A673 (cell line): ENCODE measurements at regions of chr2 and their contacts with region 1.

Region 1: DNA sequence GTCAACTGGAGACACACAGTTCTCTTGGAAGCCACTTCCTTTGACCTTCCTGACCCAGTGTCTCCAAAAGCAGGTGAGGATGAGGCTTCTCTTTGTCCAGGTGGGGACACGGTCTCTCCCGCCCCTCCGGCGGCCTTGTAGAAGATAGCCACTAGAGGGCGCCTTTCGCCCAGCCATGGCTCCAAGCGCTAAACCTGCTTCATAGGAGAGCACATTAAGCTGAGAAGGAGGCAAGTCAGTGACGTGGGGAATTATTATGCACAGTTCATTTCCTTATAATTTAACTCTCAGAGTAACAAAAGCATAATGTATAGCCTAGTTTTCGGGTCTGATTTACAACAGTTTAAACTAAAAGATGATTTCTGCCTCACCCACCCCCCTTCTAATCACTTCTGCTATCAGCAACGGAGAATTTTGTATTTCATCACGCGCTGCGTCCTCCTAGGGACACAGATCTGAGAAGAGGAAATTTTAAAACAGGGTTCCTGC is 208.7 kb downstream of the ICOS start:
- DNase-seq: peak; percentile 89
- H3K4me3 ChIP-seq: peak overlapping the region; percentile 35
- H3K27ac ChIP-seq: peak overlapping the region; percentile 55
- H3K4me1 ChIP-seq: peaks cover 3% of the 10 kb centered on the region
- H3K27me3 ChIP-seq: no peaks in the 10 kb centered on the region
- CTCF ChIP-seq: peak; percentile 98

Region 2: GRCh38 chr2:203706403-203706802 is 438.9 kb before region 1 on chr2 and contains the start of gene CD28:
- CTCF ChIA-PET with region 1: no interaction called
- POLR2A ChIA-PET with region 1: no interaction called
- intact Hi-C with region 1: no loop called
- DNase-seq: no peak
- H3K4me3 ChIP-seq: no peak within 1 kb of the TSS
- H3K27ac ChIP-seq: no peak within 1 kb of the TSS
- H3K4me1 ChIP-seq: no peaks in the 10 kb centered on the region
- H3K27me3 ChIP-seq: no peaks in the 10 kb centered on the region
- CTCF ChIP-seq: no peak
- total RNA-seq, gene CD28: not detected in 2 replicates

Region 3: GRCh38 chr2:204024503-204024902 is 120.8 kb before region 1 on chr2:
- CTCF ChIA-PET with region 1: no interaction called
- POLR2A ChIA-PET with region 1: no interaction called
- intact Hi-C with region 1: loop called (anchors 10 kb)
- DNase-seq: peak; percentile 76
- H3K4me3 ChIP-seq: no peak overlapping the region
- H3K27ac ChIP-seq: no peak overlapping the region
- H3K4me1 ChIP-seq: peaks cover 21% of the 10 kb centered on the region
- H3K27me3 ChIP-seq: no peaks in the 10 kb centered on the region
- CTCF ChIP-seq: peak; percentile 76

Region 4: DNA sequence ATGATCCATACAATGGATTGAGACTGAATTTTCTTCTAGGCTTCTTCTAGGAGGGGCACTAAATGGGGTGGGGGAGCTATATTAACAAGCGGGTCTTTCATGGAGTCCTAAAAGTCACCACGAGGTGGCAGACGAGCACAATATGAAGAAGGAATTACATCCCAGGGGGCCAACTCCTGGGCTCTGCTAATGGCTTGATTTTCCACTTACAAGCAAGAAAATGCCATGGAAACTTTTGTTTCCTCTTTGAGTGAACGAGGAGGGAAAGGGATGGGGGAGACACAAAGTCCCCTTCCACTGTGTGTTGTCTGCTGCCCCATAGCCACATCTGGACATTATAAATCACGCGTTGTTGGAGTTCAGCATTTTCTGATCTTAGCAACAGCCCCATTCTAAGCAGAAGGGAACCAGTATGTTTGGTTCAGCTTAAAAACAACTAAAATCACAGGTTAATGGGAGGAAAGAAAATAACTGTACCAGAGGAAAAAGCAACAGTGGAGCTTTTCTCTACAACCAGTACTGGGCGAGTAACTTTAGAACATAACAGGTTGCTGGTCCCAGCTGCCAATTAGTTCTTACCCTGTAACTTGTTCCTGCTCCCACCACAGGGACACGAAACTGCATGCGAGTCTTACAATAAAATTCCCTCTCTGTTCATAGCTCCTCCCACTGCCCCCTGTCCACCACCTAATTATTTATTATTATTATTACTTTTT is 115.0 kb after region 1 on chr2:
- CTCF ChIA-PET with region 1: interaction called, 4 read pairs
- POLR2A ChIA-PET with region 1: no interaction called
- intact Hi-C with region 1: loop called (anchors 2 kb)
- DNase-seq: peak; percentile 91
- H3K4me3 ChIP-seq: no peak overlapping the region
- H3K27ac ChIP-seq: no peak overlapping the region
- H3K4me1 ChIP-seq: peaks cover 39% of the 10 kb centered on the region
- H3K27me3 ChIP-seq: no peaks in the 10 kb centered on the region
- CTCF ChIP-seq: peak; percentile 90

Region 5: DNA sequence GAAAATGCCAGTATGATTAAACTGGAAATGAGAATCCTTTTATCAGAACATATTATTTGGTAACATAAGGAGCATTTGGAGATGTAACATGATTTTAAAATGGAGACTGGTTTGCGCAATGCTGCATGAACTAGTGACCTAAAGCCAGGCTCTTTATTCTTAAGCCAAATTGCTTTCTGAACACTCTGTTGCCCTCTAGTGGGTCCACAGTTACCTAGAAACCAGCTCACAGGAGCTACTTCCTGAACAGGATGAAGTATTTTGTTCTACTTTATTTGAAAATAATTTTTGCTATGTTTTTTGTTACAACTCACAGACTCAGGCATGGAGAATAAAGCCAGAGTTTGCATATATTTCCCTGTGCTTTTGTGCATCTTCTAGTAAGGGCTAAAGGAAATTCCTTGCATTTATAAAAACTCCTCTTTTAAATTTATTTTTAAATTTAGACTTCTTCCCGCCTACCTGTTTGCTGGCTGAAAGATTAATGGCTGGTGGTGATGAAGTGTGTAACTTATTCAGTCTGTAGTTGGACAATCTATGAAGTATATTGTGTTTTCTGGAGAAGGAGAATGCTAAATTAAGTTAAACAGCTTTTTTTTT is 546.7 kb after region 1 on chr2:
- CTCF ChIA-PET with region 1: interaction called, 5 read pairs
- POLR2A ChIA-PET with region 1: no interaction called
- intact Hi-C with region 1: loop called (anchors 5 kb)
- DNase-seq: peak; percentile 78
- H3K4me3 ChIP-seq: no peak overlapping the region
- H3K27ac ChIP-seq: no peak overlapping the region
- H3K4me1 ChIP-seq: peaks cover 10% of the 10 kb centered on the region
- H3K27me3 ChIP-seq: no peaks in the 10 kb centered on the region
- CTCF ChIP-seq: peak; percentile 80

Region 6: GRCh38 chr2:204860274-204860673 is 715.0 kb after region 1 on chr2:
- CTCF ChIA-PET with region 1: no interaction called
- POLR2A ChIA-PET with region 1: no interaction called
- intact Hi-C with region 1: loop called (anchors 10 kb)
- DNase-seq: no peak
- H3K4me3 ChIP-seq: no peak overlapping the region
- H3K27ac ChIP-seq: no peak overlapping the region
- H3K4me1 ChIP-seq: no peaks in the 10 kb centered on the region
- H3K27me3 ChIP-seq: no peaks in the 10 kb centered on the region
- CTCF ChIP-seq: no peak

Region 7: DNA sequence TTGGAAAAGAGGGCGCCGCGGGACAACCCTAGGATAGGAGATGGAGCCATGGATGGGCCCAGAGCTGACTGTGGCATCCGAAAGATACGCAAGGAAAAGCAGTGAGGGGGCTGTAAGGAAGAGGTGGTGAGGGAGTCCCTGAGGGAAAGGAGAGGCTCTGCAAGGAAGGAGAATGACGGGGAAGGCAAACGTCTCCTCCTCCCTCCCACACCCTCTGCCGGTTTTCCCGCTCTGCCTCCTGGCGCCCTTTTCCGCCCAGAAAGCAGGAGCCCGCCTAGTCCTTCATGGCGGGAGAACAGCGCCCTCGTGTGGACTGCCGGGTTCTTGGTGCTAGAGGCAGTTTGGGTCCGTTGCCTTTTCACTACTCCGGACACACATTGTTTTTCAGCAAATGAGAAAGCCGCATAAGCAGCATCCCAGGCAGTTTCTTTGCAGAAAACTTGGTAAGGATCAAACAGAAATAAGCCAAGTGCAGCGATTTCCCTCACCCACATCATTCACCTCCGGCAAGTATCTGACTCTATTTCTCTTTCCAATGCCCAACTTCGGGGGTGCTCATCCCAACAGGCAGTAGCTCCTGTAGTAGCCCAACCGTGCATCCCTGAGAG is 1740.3 kb after region 1 on chr2:
- CTCF ChIA-PET with region 1: no interaction called
- POLR2A ChIA-PET with region 1: no interaction called
- intact Hi-C with region 1: loop called (anchors 10 kb)
- DNase-seq: peak; percentile 91
- H3K4me3 ChIP-seq: no peak overlapping the region
- H3K27ac ChIP-seq: no peak overlapping the region
- H3K4me1 ChIP-seq: no peaks in the 10 kb centered on the region
- H3K27me3 ChIP-seq: no peaks in the 10 kb centered on the region
- CTCF ChIP-seq: peak; percentile 94

Region 8: DNA sequence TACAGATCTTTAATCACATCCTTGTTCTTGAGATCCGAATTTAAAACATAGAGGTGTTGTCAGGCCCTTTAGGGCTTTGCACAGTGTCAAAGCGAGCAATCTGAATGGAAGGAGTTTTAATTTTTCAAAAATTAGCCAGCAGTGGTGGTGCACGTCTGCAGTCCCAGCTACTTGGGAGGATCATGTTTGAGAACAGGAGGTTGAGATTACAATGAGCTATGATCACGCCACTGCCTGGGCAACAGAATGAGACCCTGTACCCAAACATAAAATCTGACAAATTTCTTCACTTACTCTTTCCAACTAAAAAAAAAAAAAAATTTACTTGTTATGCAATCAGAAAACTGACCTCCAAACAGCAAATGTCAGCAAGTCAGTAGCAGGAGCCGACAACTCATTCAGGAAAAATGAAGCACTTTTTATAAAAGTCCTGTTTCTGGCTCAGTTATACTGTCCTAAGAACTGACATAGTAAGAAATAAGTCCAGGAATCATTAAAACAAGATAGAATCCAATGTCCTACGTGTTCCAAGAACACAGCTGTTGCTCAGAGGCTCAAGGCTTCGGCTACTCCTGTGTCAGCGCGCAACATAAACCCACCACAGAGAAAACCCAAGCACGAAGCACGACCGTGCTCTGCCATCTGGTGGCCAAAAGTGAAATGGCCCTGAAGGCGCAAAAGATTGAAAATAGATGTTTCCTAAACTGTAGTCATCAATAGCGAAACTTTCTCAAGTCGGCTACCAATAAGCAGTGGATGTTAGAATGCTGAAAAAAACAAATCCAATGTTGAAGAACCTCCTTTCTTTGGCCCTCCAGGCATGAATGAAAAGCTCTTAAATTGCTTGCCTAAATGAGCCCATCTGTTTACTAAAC is 1802.6 kb after region 1 on chr2:
- CTCF ChIA-PET with region 1: no interaction called
- POLR2A ChIA-PET with region 1: no interaction called
- intact Hi-C with region 1: loop called (anchors 5 kb)
- DNase-seq: peak; percentile 72
- H3K4me3 ChIP-seq: no peak overlapping the region
- H3K27ac ChIP-seq: no peak overlapping the region
- H3K4me1 ChIP-seq: no peaks in the 10 kb centered on the region
- H3K27me3 ChIP-seq: no peaks in the 10 kb centered on the region
- CTCF ChIP-seq: peak; percentile 96